Spleen (tissue), 13 donors: ENCODE measurements at regions of chr11 and their contacts with region 1.

Region 1: GRCh38 chr11:9757809-9758636 is 94.1 kb downstream of the SWAP70 start:
- DNase-seq: peak; percentile 98
- H3K4me3 ChIP-seq: peak overlapping the region; percentile 38 to 92 (median 72)
- H3K27ac ChIP-seq: peak overlapping the region; percentile 70 to 87 (median 83)
- H3K4me1 ChIP-seq: peaks cover 30 to 75% (median 61%) of the 10 kb centered on the region in 6 donors
- H3K27me3 ChIP-seq: no peaks in the 10 kb centered on the region
- CTCF ChIP-seq: peak; percentile 3 to 97 (median 93)
- POLR2A ChIP-seq: no peak

Region 2: DNA sequence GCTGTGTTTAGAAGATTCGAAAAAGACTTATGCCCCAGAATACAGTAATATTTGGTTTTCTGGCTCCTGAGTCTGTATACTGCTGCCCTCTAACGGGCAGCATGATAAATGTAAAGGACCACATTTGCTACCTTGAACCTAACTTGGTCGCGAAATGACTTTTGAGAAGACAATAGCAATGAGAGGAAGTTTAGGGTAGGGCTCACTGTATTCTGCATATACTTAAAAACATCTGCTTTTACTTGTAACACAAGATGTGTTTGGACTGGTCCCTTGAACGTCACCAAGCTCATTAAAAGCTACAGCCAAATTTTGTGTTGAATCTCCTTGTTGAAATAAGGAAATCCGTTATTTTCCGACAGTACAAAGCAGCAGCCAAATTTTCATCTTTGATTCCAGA is 215.0 kb after region 1 on chr11:
- intact Hi-C with region 1: loop called (anchors 10 kb)
- DNase-seq: no peak
- H3K4me3 ChIP-seq: no peak overlapping the region
- H3K27ac ChIP-seq: no peak overlapping the region
- H3K4me1 ChIP-seq: peaks cover 0 to 12% (median 1%) of the 10 kb centered on the region in 6 donors
- H3K27me3 ChIP-seq: no peaks in the 10 kb centered on the region
- CTCF ChIP-seq: peak; percentile 11 to 68 (median 57)
- POLR2A ChIP-seq: no peak

Region 3: DNA sequence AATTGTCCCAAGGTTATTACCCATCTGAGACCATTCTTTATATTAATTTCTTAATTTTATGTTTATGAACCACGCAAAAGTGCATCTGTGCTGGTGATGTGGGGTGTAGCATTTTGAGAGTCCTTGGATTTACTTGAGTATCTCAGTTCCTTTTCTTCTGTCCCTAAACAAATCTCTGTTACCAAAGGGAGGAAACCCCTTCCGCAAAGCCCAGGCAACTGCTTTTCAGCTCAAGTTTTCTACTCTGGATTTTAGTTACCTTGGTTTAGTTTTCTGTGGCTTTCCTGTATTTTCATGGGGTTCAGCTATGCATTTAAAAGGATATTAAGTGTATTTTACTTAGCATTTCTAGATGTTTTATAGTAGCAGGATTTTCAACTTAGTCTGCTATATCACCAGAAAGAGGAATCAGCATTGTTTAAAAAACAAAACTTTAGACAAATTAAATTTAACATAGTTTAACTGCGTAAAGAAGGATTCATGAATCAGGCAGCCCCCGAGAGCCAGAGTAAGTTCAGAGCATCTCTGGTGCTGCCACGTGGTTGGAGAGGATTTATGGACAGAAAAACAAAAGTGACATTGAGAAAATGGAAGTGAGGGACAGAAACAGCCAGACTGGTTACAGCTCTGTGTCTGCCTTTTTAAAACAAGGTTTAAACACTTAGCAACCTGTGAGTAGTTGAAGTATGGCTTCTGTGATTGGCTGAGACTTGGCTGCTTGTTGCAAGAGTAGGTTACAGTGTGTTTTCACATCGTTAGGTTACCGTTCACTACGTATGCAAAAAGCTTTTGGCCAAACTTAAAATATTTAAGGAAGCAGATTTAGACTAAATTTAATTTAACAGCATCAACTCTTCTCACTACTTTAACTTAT is 556.4 kb after region 1 on chr11:
- intact Hi-C with region 1: loop called (anchors 5 kb)
- DNase-seq: no peak
- H3K4me3 ChIP-seq: no peak overlapping the region
- H3K27ac ChIP-seq: peak overlapping the region in 1 of 8 donors; percentile 3
- H3K4me1 ChIP-seq: peaks cover 0 to 35% (median 6%) of the 10 kb centered on the region in 6 donors
- H3K27me3 ChIP-seq: no peaks in the 10 kb centered on the region
- CTCF ChIP-seq: no peak
- POLR2A ChIP-seq: no peak

Region 4: DNA sequence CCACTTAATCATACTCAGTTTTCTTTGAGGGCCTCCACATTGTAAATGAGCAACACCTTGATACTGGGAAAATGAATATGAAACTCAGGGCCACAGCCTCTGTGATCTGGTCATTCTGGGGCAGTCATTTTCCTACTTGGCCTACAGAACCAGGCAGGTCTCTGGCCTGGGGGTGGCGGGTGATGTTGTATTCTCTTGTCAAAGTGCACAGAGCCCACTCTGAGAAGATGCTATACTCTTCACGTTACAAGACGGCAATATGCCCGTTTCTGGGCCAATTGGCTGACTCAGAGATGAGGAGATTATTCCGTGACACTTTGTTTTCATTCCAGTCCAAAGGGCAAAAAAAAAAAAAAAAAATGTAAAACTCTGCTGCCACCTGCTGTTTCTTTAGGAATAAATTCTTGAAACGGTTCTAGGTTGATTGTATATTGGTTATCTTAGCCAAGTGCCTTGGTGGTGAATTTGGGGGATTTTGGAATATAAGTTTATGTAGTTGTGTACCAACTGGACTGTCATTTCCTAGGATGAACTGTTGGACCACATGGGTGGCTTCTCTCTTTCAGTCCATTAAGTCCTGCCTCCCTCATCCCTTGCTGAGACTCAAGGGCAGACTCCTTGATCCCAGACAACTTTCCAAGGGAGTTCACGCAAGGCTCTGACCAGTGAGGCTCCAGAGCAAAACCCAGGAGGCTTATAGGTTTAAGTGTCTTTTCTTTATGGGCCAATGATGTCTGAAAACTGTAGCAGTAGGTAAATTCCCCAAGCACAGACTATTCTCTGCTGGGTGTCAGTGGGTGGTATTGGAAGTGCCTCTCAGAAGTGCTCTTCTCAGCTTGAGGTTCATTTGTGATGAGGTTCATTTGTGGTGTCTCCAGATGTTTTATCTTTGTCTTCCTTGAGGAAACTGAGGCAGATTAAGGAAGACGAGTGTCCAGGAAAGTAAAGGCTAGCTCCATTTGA is 565.1 kb after region 1 on chr11:
- intact Hi-C with region 1: loop called (anchors 5 kb)
- DNase-seq: no peak
- H3K4me3 ChIP-seq: no peak overlapping the region
- H3K27ac ChIP-seq: peak overlapping the region in 1 of 8 donors; percentile 20
- H3K4me1 ChIP-seq: peaks cover 3 to 34% (median 14%) of the 10 kb centered on the region in 6 donors
- H3K27me3 ChIP-seq: no peaks in the 10 kb centered on the region
- CTCF ChIP-seq: peak in 9 of 11 experiments; percentile 19 to 68 (median 58)
- POLR2A ChIP-seq: no peak